ENCODE measurements at regions of chr11 and their contacts with region 1.

Region 1: DNA sequence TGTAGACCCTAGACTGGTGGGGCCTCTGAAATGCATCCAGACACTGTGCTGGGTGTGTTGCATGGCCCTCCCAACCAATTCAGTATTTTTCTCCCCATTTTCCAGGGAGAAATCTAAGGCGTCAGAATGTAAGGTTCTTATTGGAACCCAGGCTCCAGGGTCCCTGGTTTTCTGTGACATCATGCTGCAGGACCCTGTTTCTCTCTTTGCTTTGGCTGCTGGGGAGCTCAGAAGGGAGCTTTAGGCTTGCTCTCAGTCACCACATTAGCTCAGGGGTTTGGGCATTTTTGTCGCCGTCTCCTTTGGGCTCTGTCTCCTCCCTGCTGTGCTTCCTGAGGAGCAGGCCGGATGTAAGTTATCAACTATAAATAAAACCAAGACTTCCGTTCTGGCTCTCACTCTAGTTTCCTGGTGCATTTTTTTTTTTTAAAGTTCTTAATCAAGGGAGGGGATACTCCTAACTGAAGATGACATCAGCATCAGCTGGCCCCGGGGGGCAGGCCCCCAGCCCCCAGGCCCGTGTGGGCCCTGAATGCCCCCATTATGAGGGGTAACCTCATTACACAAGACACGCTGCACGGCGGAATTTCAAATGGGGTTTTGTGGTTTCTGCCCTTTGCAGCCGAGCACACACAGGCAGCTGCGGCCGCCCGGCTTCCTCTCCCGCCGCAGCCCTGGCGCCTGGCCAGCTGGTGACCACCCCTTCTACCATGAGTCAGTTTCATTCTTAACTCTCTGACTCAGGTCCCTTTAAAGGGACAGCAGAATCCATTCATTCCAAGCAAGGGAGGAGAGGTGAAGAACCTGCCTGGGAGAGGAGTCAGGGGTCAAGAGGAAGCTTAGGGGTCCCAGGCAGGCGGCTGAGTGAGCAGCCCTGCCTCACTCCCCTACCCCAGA is 3.2 kb downstream of the MYEOV start:
- DNase-seq: peak; percentile 98
- H3K4me3 ChIP-seq: peak overlapping the region; percentile 33; the same call in 1 of the 2 replicates
- H3K27ac ChIP-seq: peak overlapping the region; percentile 96
- H3K4me1 ChIP-seq: peaks cover 52% of the 10 kb centered on the region
- H3K27me3 ChIP-seq: no peaks in the 10 kb centered on the region

Region 2: DNA sequence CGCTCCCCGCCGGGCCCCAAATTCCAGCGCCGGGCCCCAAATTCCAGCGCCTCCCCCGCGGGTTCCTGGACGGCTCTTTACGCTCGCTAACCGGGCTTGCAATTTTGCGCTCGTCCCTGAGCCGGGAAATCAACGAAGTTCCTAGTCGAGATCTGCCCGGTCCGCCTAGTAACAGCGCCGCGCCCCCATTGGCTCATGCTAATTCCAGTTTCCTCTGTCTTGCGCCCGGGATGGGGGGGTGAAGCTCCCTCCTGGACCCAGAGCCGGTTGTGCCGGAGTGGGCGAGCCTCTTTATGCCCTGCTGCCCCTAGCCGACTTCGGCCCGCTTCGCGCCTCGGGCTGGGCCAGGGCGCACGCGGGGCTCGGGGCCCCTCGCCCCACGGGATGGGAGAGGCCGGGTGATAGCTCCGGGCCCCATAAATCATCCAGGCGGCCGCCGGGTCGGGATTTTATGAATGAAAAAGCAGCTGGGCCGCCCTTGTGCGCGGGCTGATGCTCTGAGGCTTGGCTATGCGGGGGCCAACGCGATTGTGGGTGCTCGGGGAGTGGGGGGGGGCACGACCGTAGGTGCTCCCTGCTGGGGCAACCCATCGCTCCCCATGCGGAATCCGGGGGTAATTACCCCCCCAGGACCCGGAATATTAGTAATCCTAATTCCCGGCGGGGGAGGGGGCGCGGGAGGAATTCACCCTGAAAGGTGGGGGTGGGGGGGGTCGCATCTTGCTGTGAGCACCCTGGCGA is 342.0 kb after region 1 on chr11:
- in situ Hi-C with region 1: loop called (anchors 10 kb)
- DNase-seq: peak; percentile 99
- H3K4me3 ChIP-seq: peak overlapping the region; percentile 85
- H3K27ac ChIP-seq: peak overlapping the region; percentile 97
- H3K4me1 ChIP-seq: 0 out of 2 replicates have a peak, but pooled peaks cover 15% of the 10 kb centered on the region
- H3K27me3 ChIP-seq: no peaks in the 10 kb centered on the region